ENCODE measurements at regions of chr10 and their contacts with region 1.

Region 1: GRCh38 chr10:31318854-31319601 is at the start of gene ZEB1:
- DNase-seq: peak; percentile 91
- H3K4me3 Mint-ChIP-seq: peak within 1 kb of the TSS; percentile 86
- H3K27ac Mint-ChIP-seq: peak within 1 kb of the TSS; percentile 88
- H3K4me1 Mint-ChIP-seq: peaks cover 27% of the 10 kb centered on the region
- H3K27me3 Mint-ChIP-seq: no peaks in the 10 kb centered on the region
- CTCF ChIP-seq: peak; percentile 43
- total RNA-seq, gene ZEB1: 15.1 and 20.6 TPM in 2 replicates

Region 2: DNA sequence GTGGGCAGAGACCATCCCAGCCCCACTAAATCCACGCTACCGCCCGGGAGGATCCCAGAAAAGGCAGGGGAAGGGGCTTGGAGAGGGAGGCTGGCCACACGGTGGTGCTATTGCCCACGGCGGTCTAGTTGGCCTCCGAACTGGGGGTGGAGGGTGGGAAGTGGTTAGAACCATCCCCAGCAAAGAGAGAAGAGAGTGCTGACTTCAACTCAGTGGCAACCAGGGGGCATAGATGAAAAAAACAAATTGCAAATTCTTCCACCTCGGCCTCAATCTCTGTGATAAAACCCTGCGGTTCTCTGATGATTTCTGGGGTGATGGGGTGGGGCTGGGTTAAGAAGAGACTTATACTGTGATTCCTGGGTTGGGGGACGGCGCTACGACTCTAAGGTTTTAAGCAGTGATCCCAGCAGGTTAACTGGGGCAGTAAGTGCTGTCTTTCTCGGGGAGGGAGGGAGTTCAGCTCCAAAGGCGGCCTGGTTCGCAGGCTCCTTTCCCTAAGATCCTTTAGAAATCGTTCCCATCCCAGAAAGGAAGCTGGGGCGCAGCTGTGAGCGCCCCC is 535.0 kb before region 1 on chr10:
- CTCF ChIA-PET with region 1: no interaction called
- POLR2A ChIA-PET with region 1: interaction called, 3 read pairs
- intact Hi-C with region 1: loop called (anchors 5 kb)
- DNase-seq: peak; percentile 54
- H3K4me3 Mint-ChIP-seq: no peak overlapping the region
- H3K27ac Mint-ChIP-seq: no peak overlapping the region
- H3K4me1 Mint-ChIP-seq: peaks cover 24% of the 10 kb centered on the region
- H3K27me3 Mint-ChIP-seq: no peaks in the 10 kb centered on the region
- CTCF ChIP-seq: peak; percentile 73